Common myeloid progenitor, CD34-positive (primary cell): ENCODE measurements at regions of chr20 and their contacts with region 1.

Region 1: GRCh38 chr20:31723319-31724078 is 831 bp upstream of the BCL2L1 start:
- DNase-seq: peak; percentile 98 to 99 (median 99)
- H3K4me3 ChIP-seq: peak overlapping the region; percentile 81 to 95 (median 88)
- H3K27ac ChIP-seq: peak overlapping the region; percentile 92 to 98
- H3K4me1 ChIP-seq: peaks cover 25 to 45% (median 41%) of the 10 kb centered on the region in 4 experiments
- H3K27me3 ChIP-seq: no peaks in the 10 kb centered on the region

Region 2: GRCh38 chr20:31508517-31509244 is 214.8 kb before region 1 on chr20:
- CTCF ChIA-PET with region 1: no interaction called
- POLR2A ChIA-PET with region 1: no interaction called
- DNase-seq: no peak
- H3K4me3 ChIP-seq: no peak overlapping the region
- H3K27ac ChIP-seq: no peak overlapping the region
- H3K4me1 ChIP-seq: peaks cover 0 to 2% (median 0%) of the 10 kb centered on the region in 4 experiments
- H3K27me3 ChIP-seq: peaks cover 0 to 3% (median 0%) of the 10 kb centered on the region in 5 experiments

Region 3: GRCh38 chr20:31560094-31560899 is 163.2 kb before region 1 on chr20:
- CTCF ChIA-PET with region 1: interaction called, 30 read pairs
- POLR2A ChIA-PET with region 1: interaction called, 3 read pairs
- DNase-seq: peak; percentile 86 to 95 (median 92)
- H3K4me3 ChIP-seq: no peak overlapping the region
- H3K27ac ChIP-seq: peak overlapping the region in 1 of 2 experiments; percentile 50
- H3K4me1 ChIP-seq: peaks cover 0 to 16% (median 13%) of the 10 kb centered on the region in 4 experiments
- H3K27me3 ChIP-seq: no peaks in the 10 kb centered on the region

Region 4: DNA sequence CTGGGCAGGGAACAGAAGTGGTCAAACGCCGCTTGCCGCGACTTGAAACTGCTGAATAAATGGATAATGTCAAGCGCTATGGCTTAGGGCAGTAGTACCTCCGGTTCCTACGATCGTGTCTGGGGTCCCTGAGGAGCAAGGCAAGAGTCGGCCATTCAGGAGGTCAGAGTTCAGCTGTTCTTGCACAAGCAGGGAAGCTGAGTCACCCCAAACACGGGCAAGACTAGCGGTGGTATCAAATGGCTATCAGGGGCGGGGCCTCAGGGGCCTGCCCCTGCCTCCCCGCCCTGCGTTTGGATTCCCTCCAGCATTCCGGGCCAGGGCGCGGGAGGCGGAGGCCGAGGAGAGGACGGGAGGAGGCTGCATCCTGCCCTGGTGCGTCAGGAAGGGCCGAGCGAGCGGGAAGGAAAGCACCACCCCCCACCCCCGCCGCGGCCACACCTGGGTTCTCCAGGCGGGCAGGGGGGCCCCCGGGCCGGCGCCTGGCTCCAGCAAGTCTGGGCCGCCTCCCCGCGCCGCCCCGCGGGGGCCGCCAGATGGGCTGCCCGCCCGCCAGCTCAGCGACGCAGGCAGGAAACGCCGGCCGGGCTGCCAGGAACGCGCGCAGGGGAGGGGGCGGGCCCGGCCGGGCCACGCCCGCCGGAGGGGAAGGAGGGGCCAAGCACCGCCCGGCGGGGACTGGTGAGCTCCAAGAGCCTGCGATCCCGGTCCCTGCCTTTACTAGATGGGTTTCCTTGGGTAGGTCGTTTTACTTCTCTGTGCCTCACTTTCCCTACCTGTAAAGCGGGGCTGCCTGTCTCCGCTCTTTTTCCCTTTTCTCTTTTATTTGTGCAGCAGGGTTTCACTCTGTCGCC is 150.6 kb before region 1 on chr20:
- CTCF ChIA-PET with region 1: interaction called, 18 read pairs
- POLR2A ChIA-PET with region 1: no interaction called
- DNase-seq: peak; percentile 88 to 97 (median 95)
- H3K4me3 ChIP-seq: peak overlapping the region; percentile 53 to 92 (median 76)
- H3K27ac ChIP-seq: peak overlapping the region; percentile 77 to 86
- H3K4me1 ChIP-seq: peaks cover 0 to 44% (median 37%) of the 10 kb centered on the region in 4 experiments
- H3K27me3 ChIP-seq: no peaks in the 10 kb centered on the region

Region 5: GRCh38 chr20:31644701-31645100 is 78.8 kb before region 1 on chr20:
- CTCF ChIA-PET with region 1: interaction called, 21 read pairs
- POLR2A ChIA-PET with region 1: no interaction called
- DNase-seq: no peak
- H3K4me3 ChIP-seq: no peak overlapping the region
- H3K27ac ChIP-seq: no peak overlapping the region
- H3K4me1 ChIP-seq: peaks cover 0 to 8% (median 4%) of the 10 kb centered on the region in 4 experiments
- H3K27me3 ChIP-seq: no peaks in the 10 kb centered on the region

Region 6: DNA sequence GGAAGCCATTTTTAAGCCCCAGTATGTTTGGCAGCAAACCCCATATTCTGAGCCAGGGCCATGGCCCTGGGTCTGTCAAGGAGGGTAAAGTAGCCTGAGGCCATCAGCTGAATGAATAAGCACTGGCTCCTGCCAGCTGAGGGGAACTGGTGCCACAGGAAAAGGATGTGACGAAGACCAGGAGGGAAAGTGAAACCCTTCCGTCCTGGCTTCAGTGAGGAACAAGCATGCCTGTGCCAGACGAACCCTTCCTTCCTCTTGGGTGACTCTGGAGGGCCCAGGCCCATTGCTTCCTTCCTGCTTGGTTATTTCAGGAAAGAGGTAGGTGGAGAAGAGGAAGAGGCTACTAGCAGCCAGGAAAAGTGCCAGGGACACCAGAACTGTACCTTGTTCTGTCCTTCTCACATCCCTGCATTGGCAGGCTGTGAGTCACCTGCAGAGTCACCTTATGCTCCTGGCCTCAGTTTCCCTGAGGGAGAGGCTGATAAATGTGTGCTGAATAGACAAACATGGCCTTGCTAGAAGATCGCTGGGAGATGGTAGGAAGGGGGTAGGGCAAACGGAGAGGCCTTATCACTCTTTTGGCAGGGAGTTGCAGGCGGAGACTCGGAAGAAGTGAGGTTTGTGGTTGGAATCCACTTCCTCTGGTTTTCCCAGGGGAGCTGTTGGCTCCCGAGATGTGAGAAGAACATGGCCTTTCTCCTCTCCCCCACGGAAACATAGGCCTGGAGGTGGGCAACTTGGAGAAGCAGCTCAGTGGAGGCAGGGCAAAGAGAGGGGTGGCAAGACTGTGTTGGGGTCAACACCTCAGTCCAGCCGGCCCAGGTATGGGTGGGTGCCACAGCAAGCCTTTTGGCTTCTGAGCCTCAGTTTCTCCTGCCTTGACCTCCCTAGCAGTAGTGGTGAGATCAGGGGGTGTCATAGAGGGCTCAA is 48.3 kb before region 1 on chr20:
- CTCF ChIA-PET with region 1: interaction called, 74 read pairs
- POLR2A ChIA-PET with region 1: interaction called, 15 read pairs
- DNase-seq: peak; percentile 97 to 99 (median 98)
- H3K4me3 ChIP-seq: peak overlapping the region in 6 of 7 experiments; percentile 23 to 68 (median 59)
- H3K27ac ChIP-seq: peak overlapping the region; percentile 43 to 88
- H3K4me1 ChIP-seq: peaks cover 20 to 90% (median 78%) of the 10 kb centered on the region in 4 experiments
- H3K27me3 ChIP-seq: no peaks in the 10 kb centered on the region

Region 7: GRCh38 chr20:31698803-31699718 is 24.4 kb before region 1 on chr20:
- CTCF ChIA-PET with region 1: interaction called, 67 read pairs
- POLR2A ChIA-PET with region 1: no interaction called
- DNase-seq: peak in 2 of 3 donors; percentile 55 to 69
- H3K4me3 ChIP-seq: peak overlapping the region in 1 of 7 experiments; percentile 30
- H3K27ac ChIP-seq: peak overlapping the region in 1 of 2 experiments; percentile 61
- H3K4me1 ChIP-seq: peaks cover 0 to 34% (median 23%) of the 10 kb centered on the region in 4 experiments
- H3K27me3 ChIP-seq: no peaks in the 10 kb centered on the region

Region 8: GRCh38 chr20:31767805-31768204 is 44.3 kb after region 1 on chr20:
- CTCF ChIA-PET with region 1: no interaction called
- POLR2A ChIA-PET with region 1: no interaction called
- DNase-seq: no peak
- H3K4me3 ChIP-seq: no peak overlapping the region
- H3K27ac ChIP-seq: no peak overlapping the region
- H3K4me1 ChIP-seq: no peaks in the 10 kb centered on the region
- H3K27me3 ChIP-seq: no peaks in the 10 kb centered on the region